ENCODE measurements at regions of chr2 and their contacts with region 1.

Region 1: DNA sequence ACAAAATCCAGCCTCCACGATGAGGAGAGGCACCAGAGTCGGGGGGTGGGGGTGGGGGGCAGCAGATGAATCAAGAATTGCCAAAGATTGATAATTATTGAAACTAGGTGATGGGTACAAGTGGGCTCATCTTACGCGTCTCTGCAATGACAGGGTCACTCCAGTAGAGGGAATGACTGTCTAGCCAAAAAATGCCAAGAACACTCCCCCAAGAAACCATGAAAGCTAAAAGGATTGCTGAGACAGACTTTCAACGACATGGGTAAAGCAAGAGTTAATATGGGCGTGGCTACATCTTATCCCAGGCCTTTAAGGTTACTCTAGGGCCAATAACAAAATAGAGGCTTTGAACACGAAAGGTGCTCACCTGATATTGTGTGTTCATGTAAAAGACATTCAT is 86.5 kb downstream of the STK39 start:
- DNase-seq: peak; percentile 60
- ATAC-seq: peak; percentile 67
- H3K4me3 ChIP-seq: no peak overlapping the region
- H3K27ac ChIP-seq: no peak overlapping the region
- H3K4me1 ChIP-seq: peaks cover 10% of the 10 kb centered on the region
- H3K27me3 ChIP-seq: no peaks in the 10 kb centered on the region
- CTCF ChIP-seq: peak; percentile 57
- EP300 ChIP-seq: no peak
- POLR2A ChIP-seq: no peak
- RAD21 ChIP-seq: peak; percentile 79

Region 2: GRCh38 chr2:168060986-168061750 is 99.7 kb before region 1 on chr2:
- CTCF ChIA-PET with region 1: no interaction called
- POLR2A ChIA-PET with region 1: no interaction called
- in situ Hi-C with region 1: no loop called
- intact Hi-C with region 1: no loop called
- DNase-seq: no peak
- ATAC-seq: no peak
- H3K4me3 ChIP-seq: no peak overlapping the region
- H3K27ac ChIP-seq: no peak overlapping the region
- H3K4me1 ChIP-seq: peaks cover 14% of the 10 kb centered on the region; the same call in 1 of the 2 replicates
- H3K27me3 ChIP-seq: no peaks in the 10 kb centered on the region
- CTCF ChIP-seq: no peak
- EP300 ChIP-seq: no peak
- POLR2A ChIP-seq: no peak
- RAD21 ChIP-seq: no peak

Region 3: DNA sequence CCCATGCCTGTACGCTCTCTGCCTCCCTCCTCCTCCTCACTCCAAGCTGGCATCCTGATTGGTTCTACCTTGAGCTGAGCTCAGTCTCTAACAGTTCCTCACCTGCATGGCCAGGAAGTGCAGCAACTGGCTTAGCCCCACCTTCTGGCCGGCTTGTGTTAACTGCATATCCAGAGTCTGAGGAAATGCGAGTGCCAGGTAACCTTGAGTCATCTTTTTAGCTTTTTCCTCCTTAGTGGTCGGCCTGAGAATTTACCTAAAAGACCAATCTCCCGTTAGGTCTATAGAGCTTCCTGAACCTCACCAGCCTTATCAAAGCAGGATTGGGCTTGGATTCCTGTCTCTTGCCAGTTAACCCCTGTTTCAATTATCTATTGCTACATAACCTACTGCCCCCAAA is 176.0 kb after region 1 on chr2:
- CTCF ChIA-PET with region 1: interaction called, 6 read pairs
- POLR2A ChIA-PET with region 1: no interaction called
- in situ Hi-C with region 1: loop called (anchors 5 kb)
- intact Hi-C with region 1: loop called (anchors 1 kb)
- DNase-seq: peak; percentile 69
- ATAC-seq: peak; percentile 99
- H3K4me3 ChIP-seq: no peak overlapping the region
- H3K27ac ChIP-seq: no peak overlapping the region
- H3K4me1 ChIP-seq: peaks cover 5% of the 10 kb centered on the region; the same call in 1 of the 2 replicates
- H3K27me3 ChIP-seq: peaks cover 1 to 10% of the 10 kb centered on the region in 2 experiments; a peak in 2 of 5 replicates
- CTCF ChIP-seq: peak; percentile 88
- EP300 ChIP-seq: no peak
- POLR2A ChIP-seq: no peak
- RAD21 ChIP-seq: peak; percentile 81

Measured in HepG2 (cell line).